ENCODE measurements at regions of chr9 and their contacts with region 1.

Region 1: GRCh38 chr9:72119853-72120252 is 29.4 kb upstream of the GDA start:
- DNase-seq: no peak
- H3K4me3 ChIP-seq: no peak overlapping the region
- H3K27ac ChIP-seq: no peak overlapping the region
- H3K4me1 ChIP-seq: no peaks in the 10 kb centered on the region
- H3K27me3 ChIP-seq: no peaks in the 10 kb centered on the region
- CTCF ChIP-seq: no peak

Region 2: DNA sequence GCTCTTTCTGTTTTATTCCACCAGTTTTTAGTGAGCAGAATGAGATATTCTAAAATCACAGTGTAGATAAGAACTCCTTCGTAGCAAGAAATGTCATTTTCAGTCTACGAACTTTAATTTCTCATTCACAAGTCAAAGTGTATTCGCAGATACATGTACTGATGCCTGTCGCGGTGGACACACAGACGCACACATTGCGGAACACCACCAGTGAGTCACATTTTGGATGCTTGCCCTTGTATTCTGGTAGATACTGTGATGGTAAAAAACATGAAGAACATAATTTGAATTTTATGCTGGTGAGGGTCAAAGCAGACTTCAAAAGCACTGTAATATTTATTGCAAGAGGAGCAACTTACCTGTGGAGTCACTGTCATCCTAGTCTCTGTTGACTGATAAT is 54.8 kb before region 1 on chr9:
- CTCF ChIA-PET with region 1: no interaction called
- POLR2A ChIA-PET with region 1: no interaction called
- intact Hi-C with region 1: no loop called
- DNase-seq: no peak
- H3K4me3 ChIP-seq: no peak overlapping the region
- H3K27ac ChIP-seq: no peak overlapping the region
- H3K4me1 ChIP-seq: no peaks in the 10 kb centered on the region
- H3K27me3 ChIP-seq: no peaks in the 10 kb centered on the region
- CTCF ChIP-seq: no peak

Region 3: GRCh38 chr9:72133365-72134035 is 13.6 kb after region 1 on chr9:
- CTCF ChIA-PET with region 1: no interaction called
- POLR2A ChIA-PET with region 1: no interaction called
- intact Hi-C with region 1: loop called (anchors 2 kb)
- DNase-seq: no peak
- H3K4me3 ChIP-seq: no peak overlapping the region
- H3K27ac ChIP-seq: no peak overlapping the region
- H3K4me1 ChIP-seq: no peaks in the 10 kb centered on the region
- H3K27me3 ChIP-seq: no peaks in the 10 kb centered on the region
- CTCF ChIP-seq: no peak

Region 4: GRCh38 chr9:72145733-72146495 is 26.1 kb after region 1 on chr9:
- CTCF ChIA-PET with region 1: no interaction called
- POLR2A ChIA-PET with region 1: no interaction called
- intact Hi-C with region 1: loop called (anchors 2 kb)
- DNase-seq: no peak
- H3K4me3 ChIP-seq: no peak overlapping the region
- H3K27ac ChIP-seq: no peak overlapping the region
- H3K4me1 ChIP-seq: no peaks in the 10 kb centered on the region
- H3K27me3 ChIP-seq: peaks cover 43% of the 10 kb centered on the region
- CTCF ChIP-seq: no peak